H1 (cell line): ENCODE measurements at regions of chr6 and their contacts with region 1.

Region 1: GRCh38 chr6:4021133-4021853 is 57.6 kb downstream of the FAM217A start:
- DNase-seq: peak; percentile 78 to 91
- H3K4me3 ChIP-seq: peak overlapping the region; percentile 86 to 94 (median 93)
- H3K27ac ChIP-seq: peak overlapping the region; percentile 98
- H3K4me1 ChIP-seq: peaks cover 4 to 14% (median 6%) of the 10 kb centered on the region in 4 experiments; a peak in 6 of 7 replicates
- H3K27me3 ChIP-seq: no peaks in the 10 kb centered on the region
- CTCF ChIP-seq: peak in 2 of 3 experiments; percentile 7 to 20; a peak in 2 of 4 replicates
- EP300 ChIP-seq: no peak
- POLR2A ChIP-seq: peak; percentile 13 to 87; a peak in 2 of 3 replicates
- RAD21 ChIP-seq: no peak

Region 2: GRCh38 chr6:3557336-3557735 is 464.0 kb before region 1 on chr6:
- CTCF ChIA-PET with region 1: no interaction called
- POLR2A ChIA-PET with region 1: no interaction called
- DNase-seq: no peak
- H3K4me3 ChIP-seq: no peak overlapping the region
- H3K27ac ChIP-seq: no peak overlapping the region
- H3K4me1 ChIP-seq: no peaks in the 10 kb centered on the region; a peak in 1 of 7 replicates
- H3K27me3 ChIP-seq: no peaks in the 10 kb centered on the region
- CTCF ChIP-seq: no peak
- EP300 ChIP-seq: no peak
- POLR2A ChIP-seq: no peak
- RAD21 ChIP-seq: no peak

Region 3: DNA sequence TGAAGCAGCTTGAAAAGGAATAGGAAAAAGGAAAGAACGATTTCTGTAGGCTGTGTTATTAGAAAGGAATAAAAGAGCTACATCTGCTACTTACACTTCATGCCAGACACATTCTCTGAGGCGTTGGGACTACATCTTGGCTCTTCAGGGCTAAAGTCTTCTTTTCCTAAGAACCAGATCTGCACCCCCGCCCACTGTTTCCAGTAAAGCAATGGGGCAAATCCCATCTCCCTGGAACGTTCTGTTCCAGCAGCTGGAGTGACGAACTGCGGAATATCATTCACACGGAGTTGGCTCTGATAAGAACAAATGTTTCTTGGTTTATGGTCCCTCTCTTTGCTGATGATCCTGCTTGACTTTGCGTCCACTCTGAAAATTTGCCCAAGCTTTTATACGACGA is 145.2 kb before region 1 on chr6:
- CTCF ChIA-PET with region 1: no interaction called
- POLR2A ChIA-PET with region 1: no interaction called
- DNase-seq: no peak
- H3K4me3 ChIP-seq: no peak overlapping the region
- H3K27ac ChIP-seq: no peak overlapping the region
- H3K4me1 ChIP-seq: no peaks in the 10 kb centered on the region; a peak in 1 of 7 replicates
- H3K27me3 ChIP-seq: no peaks in the 10 kb centered on the region
- CTCF ChIP-seq: no peak
- EP300 ChIP-seq: no peak
- POLR2A ChIP-seq: no peak
- RAD21 ChIP-seq: no peak

Region 4: GRCh38 chr6:4008324-4009047 is 12.8 kb before region 1 on chr6:
- CTCF ChIA-PET with region 1: interaction called, 3 read pairs
- POLR2A ChIA-PET with region 1: interaction called, 13 read pairs
- DNase-seq: no peak
- H3K4me3 ChIP-seq: no peak overlapping the region
- H3K27ac ChIP-seq: no peak overlapping the region
- H3K4me1 ChIP-seq: peaks cover 0 to 4% (median 0%) of the 10 kb centered on the region in 4 experiments; a peak in 1 of 7 replicates
- H3K27me3 ChIP-seq: no peaks in the 10 kb centered on the region
- CTCF ChIP-seq: no peak
- EP300 ChIP-seq: no peak
- POLR2A ChIP-seq: no peak
- RAD21 ChIP-seq: peak; percentile 24 to 40; a peak in 3 of 4 replicates

Region 5: GRCh38 chr6:4093288-4093687 is 72.0 kb after region 1 on chr6:
- CTCF ChIA-PET with region 1: no interaction called
- POLR2A ChIA-PET with region 1: no interaction called
- DNase-seq: no peak
- H3K4me3 ChIP-seq: no peak overlapping the region
- H3K27ac ChIP-seq: no peak overlapping the region
- H3K4me1 ChIP-seq: no peaks in the 10 kb centered on the region
- H3K27me3 ChIP-seq: no peaks in the 10 kb centered on the region
- CTCF ChIP-seq: no peak
- EP300 ChIP-seq: no peak
- POLR2A ChIP-seq: no peak
- RAD21 ChIP-seq: no peak

Region 6: GRCh38 chr6:4135665-4136353 is 114.5 kb after region 1 on chr6:
- CTCF ChIA-PET with region 1: no interaction called
- POLR2A ChIA-PET with region 1: interaction called, 17 read pairs
- DNase-seq: peak; percentile 82 to 92
- H3K4me3 ChIP-seq: peak overlapping the region; percentile 39 to 84 (median 58)
- H3K27ac ChIP-seq: peak overlapping the region; percentile 49; the same call in 1 of the 2 replicates
- H3K4me1 ChIP-seq: peaks cover 2 to 5% (median 4%) of the 10 kb centered on the region in 4 experiments; a peak in 5 of 7 replicates
- H3K27me3 ChIP-seq: no peaks in the 10 kb centered on the region
- CTCF ChIP-seq: no peak
- EP300 ChIP-seq: no peak
- POLR2A ChIP-seq: peak; percentile 12 to 45; a peak in 2 of 3 replicates
- RAD21 ChIP-seq: no peak

Region 7: DNA sequence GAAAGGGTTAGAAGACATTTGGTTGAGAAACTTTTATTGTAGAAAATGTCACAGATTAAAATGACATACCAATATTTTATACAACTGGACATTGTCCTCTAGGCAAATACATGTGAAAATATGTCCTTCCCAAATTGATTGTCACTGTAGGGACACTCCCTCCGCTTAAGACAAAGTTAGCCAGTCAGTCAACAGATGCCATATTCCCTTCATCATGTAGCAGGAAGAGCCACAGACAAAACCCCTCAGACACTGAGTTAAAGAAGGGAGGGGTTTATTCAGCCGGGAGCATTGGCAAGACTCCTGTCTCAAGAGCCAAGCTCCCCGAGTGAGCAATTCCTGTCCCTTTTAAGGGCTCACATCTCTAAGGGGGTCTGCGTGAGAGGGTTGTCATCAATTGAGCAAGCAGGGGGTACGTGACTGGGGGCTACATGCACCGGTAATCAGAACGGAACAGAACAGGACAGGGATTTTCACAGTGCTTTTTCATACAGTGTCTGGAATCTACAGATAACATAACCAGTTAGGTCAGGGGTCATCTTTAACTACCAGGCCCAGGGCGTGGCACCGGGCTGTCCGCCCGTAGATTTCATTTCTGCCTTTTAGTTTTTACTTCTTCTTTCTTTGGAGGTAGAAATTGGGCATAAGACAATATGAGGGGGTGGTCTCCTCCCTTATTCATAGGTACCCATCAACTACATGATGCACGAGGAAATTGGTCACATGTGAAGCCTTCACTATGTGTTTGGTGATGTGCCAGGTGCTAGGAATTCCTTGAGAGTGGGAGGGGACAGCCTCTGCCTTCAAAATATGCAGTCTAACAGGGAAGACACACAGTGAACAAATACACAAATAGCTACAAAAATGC is 599.2 kb after region 1 on chr6:
- CTCF ChIA-PET with region 1: no interaction called
- POLR2A ChIA-PET with region 1: no interaction called
- DNase-seq: no peak
- H3K4me3 ChIP-seq: no peak overlapping the region
- H3K27ac ChIP-seq: no peak overlapping the region
- H3K4me1 ChIP-seq: no peaks in the 10 kb centered on the region
- H3K27me3 ChIP-seq: no peaks in the 10 kb centered on the region
- CTCF ChIP-seq: no peak
- EP300 ChIP-seq: no peak
- POLR2A ChIP-seq: no peak
- RAD21 ChIP-seq: no peak